ENCODE measurements at regions of chr4 and their contacts with region 1.

Region 1: DNA sequence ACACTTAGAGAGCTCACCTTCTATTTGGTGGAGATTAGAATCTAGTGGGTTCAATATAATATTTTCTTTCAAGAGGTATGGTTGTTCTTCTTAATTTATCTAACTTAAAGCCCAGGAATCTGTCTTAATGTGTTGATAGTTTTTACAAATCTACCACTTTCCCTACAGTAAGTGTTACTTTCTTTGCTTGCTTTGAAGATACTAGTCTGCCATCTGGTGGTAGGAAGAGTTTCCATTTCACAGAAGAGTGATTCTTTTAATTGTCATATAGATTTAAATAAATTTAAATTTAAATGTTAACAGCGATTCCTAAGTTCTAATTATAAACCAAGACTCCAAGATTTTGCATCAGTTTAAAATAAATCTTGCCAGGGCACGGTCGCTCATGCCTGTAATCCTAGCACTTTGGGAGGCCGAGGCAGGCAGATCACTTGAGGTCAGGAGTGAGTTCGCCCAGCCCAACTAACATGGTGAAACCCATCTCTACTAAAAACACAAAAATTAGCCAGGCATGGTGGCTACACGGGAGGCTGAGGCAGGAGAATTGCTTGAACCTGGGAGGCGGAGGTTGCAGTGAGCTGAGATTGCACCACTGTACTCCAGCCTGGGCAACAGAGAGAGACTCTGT is 43.5 kb downstream of the NUDT9 start:
- DNase-seq: no peak
- H3K4me3 ChIP-seq: no peak overlapping the region
- H3K27ac ChIP-seq: no peak overlapping the region
- H3K4me1 ChIP-seq: no peaks in the 10 kb centered on the region
- H3K27me3 ChIP-seq: no peaks in the 10 kb centered on the region
- CTCF ChIP-seq: peak; percentile 46 to 64 (median 54)
- POLR2A ChIP-seq: no peak

Region 2: GRCh38 chr4:86948276-86948675 is 517.6 kb before region 1 on chr4:
- intact Hi-C with region 1: no loop called
- DNase-seq: no peak
- H3K4me3 ChIP-seq: no peak overlapping the region
- H3K27ac ChIP-seq: no peak overlapping the region
- H3K4me1 ChIP-seq: peaks cover 26% of the 10 kb centered on the region
- H3K27me3 ChIP-seq: no peaks in the 10 kb centered on the region
- CTCF ChIP-seq: no peak
- POLR2A ChIP-seq: no peak

Region 3: DNA sequence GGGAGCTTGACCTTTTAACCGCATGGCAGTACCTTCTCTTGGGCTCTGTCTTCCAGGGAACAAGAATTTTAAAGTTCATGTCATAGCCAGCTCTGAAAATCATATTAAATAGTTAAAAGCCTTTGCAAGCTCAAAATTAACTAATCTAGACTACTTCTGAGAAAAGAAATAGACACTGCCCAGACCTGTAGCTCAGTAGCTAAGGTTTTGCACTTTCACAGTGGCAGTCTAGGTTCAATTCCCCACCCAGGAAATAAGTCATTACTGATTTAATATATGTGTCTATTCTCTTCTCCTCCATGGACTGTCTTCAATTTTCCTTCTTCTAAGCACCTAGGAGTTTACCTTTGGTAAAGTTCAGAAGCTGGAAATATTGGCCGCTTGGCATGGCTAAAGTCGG is 102.3 kb before region 1 on chr4:
- intact Hi-C with region 1: loop called (anchors 5 kb)
- DNase-seq: no peak
- H3K4me3 ChIP-seq: no peak overlapping the region
- H3K27ac ChIP-seq: no peak overlapping the region
- H3K4me1 ChIP-seq: peaks cover 7% of the 10 kb centered on the region
- H3K27me3 ChIP-seq: no peaks in the 10 kb centered on the region
- CTCF ChIP-seq: no peak
- POLR2A ChIP-seq: no peak

Region 4: DNA sequence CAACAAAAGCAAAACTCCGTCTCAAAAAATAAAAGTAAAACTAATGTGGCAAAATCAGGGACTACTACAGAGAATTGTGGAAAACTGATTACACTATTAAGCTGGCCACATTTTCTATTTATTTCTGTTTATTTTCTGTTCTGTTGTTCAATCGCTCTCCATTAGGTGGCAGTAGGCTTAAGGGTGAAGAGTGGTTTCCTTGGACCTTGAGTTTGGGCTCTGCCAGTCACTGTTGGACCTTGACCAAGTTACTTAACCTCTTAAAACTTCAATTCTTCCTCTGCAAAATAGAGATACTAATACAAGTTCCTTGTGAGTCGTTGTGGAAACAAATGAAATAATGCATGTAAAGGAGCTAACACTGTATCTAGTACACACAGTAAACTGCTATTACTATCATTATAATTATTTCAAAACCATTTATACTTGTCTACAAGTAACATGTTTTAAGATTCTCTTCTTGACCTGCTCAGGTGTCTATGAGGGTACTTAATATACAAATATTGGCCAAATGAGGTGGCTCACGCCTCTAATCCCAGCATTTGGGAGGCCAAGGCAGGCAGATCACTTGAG is 90.0 kb before region 1 on chr4:
- intact Hi-C with region 1: loop called (anchors 5 kb)
- DNase-seq: no peak
- H3K4me3 ChIP-seq: no peak overlapping the region
- H3K27ac ChIP-seq: peak overlapping the region; percentile 69
- H3K4me1 ChIP-seq: peaks cover 16% of the 10 kb centered on the region
- H3K27me3 ChIP-seq: no peaks in the 10 kb centered on the region
- CTCF ChIP-seq: peak; percentile 29 to 67 (median 67)
- POLR2A ChIP-seq: no peak

Measured in vagina (tissue), 2 donors.